WTC11 (cell line): ENCODE measurements at regions of chr12 and their contacts with region 1.

Region 1: DNA sequence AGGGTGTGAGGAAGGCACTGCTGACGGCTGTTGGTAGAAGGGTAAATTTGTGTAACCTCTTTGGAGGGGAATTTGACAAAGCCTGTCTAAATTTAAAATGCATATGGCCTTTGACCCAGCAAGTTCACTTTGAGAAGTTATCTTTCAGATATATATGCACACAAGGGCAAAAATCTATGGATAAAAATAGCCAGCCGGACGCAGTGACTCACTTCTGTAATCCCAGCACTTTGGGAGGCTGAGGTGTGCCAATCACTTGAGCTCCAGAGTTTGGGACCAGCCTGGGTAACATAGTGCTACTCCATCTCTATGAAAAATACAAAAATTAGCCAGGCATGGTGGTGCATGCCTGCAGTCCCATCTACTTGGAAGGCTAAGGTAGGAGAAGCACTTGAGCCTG is 13.4 kb downstream of the UBC start:
- DNase-seq: no peak
- ATAC-seq: no peak
- H3K4me3 Mint-ChIP-seq: no peak overlapping the region
- H3K27ac Mint-ChIP-seq: no peak overlapping the region
- H3K4me1 Mint-ChIP-seq: peaks cover 20% of the 10 kb centered on the region
- H3K27me3 Mint-ChIP-seq: no peaks in the 10 kb centered on the region
- CTCF ChIP-seq: no peak

Region 2: GRCh38 chr12:124833693-124834122 is 67.3 kb before region 1 on chr12:
- CTCF ChIA-PET with region 1: interaction called, 17 read pairs
- POLR2A ChIA-PET with region 1: no interaction called
- DNase-seq: peak; percentile 75
- ATAC-seq: peak; percentile 80
- H3K4me3 Mint-ChIP-seq: no peak overlapping the region
- H3K27ac Mint-ChIP-seq: 0 out of 2 replicates have a peak overlapping the region, but pooled peaks have one; percentile 36
- H3K4me1 Mint-ChIP-seq: peaks cover 47% of the 10 kb centered on the region
- H3K27me3 Mint-ChIP-seq: no peaks in the 10 kb centered on the region
- CTCF ChIP-seq: no peak